Posterior cingulate gyrus (tissue), 11 donors: ENCODE measurements at regions of chr17 and their contacts with region 1.

Region 1: DNA sequence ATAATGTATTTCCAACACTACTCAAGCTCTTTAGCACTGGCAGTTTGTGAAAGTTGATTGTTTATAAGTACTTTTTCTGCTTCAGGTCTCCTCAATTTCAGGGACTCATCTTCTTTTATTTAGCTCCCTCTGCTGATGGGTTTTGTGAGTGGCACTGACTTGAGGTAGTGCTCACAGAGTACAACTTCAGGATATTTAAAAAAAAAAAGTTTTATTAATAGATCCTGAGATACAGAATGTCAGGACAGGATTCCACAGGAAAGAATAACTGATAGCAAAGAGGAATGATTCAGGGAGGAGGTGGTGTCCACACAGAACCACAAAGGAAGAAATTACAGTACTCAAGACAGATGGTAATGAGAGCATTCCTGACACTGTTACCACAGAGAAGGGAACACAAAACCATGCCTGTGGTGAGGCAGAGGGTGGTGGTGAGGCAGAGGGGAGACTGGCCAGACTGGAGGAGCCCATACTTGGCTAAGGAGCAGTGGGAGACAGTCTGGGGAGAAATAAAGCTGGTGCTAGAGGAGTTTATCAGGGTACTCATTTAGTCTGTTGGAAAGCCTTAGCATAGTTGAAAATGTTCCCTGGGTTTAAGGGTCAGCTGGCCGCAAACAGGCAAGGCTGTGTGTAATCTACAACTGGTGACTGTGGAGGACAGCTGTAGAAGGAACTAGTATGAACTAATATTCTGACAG is 63.7 kb downstream of the SPAG9 start:
- DNase-seq: peak in 1 of 10 donors; percentile 35

Region 2: GRCh38 chr17:51000835-51001638 is 55.9 kb before region 1 on chr17:
- intact Hi-C with region 1: loop called (anchors 1 kb)
- DNase-seq: no peak

Region 3: GRCh38 chr17:51120739-51121617 is 64.0 kb after region 1 on chr17 and contains the start of gene SPAG9:
- intact Hi-C with region 1: no loop called
- DNase-seq: peak; percentile 81 to 99 (median 93)